Testis (tissue), 5 donors: ENCODE measurements at regions of chr5 and their contacts with region 1.

Region 1: DNA sequence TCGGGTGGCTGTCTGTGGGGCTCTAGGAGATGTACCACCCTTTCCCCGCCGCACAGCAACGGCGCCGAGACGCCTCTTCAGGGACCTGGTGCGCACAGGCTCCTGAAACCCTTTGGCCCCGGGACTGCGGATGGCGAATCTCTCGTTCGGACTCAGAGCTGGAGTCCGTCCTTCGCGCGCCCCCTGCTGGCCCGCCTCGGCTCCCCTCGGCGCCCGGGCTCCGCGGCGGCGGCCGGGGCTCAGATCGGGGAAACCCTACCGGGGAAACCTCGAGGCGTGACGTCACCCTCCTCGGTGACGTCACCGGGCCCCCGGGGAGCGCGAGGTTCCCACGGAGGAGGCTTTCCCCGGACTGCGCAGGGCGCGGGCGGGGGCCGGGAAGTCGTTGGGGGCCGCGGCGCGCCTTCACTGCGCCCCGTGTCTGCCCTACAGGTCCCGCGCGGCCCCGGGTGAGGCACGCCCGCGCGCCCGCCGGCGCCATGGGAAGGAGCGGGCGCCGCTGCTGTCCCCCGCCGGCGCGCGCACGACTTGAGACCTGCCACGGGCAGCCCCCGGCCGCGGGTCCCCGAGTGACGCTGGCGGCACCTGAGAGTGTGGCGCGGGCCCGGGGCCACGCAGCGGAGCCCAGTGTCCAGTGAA is 7.9 kb downstream of the PRR7 start:
- DNase-seq: peak; percentile 93
- H3K4me3 ChIP-seq: peak overlapping the region; percentile 58 to 66
- H3K27ac ChIP-seq: peak overlapping the region; percentile 24 to 55
- H3K4me1 ChIP-seq: peaks cover 14% of the 10 kb centered on the region
- H3K27me3 ChIP-seq: no peaks in the 10 kb centered on the region
- CTCF ChIP-seq: peak; percentile 91 to 99 (median 98)
- POLR2A ChIP-seq: no peak

Region 2: GRCh38 chr5:176447982-176448608 is 1006.4 kb before region 1 on chr5 and contains the start of gene FAF2:
- intact Hi-C with region 1: no loop called
- DNase-seq: peak; percentile 98
- H3K4me3 ChIP-seq: peak within 1 kb of the TSS; percentile 91 to 98
- H3K27ac ChIP-seq: peak within 1 kb of the TSS; percentile 93 to 95
- H3K4me1 ChIP-seq: peaks cover 17% of the 10 kb centered on the region
- H3K27me3 ChIP-seq: no peaks in the 10 kb centered on the region
- CTCF ChIP-seq: peak; percentile 98 to 99 (median 98)
- POLR2A ChIP-seq: peak; percentile 59
- total RNA-seq, gene FAF2: 53.9 to 57.6 TPM

Region 3: DNA sequence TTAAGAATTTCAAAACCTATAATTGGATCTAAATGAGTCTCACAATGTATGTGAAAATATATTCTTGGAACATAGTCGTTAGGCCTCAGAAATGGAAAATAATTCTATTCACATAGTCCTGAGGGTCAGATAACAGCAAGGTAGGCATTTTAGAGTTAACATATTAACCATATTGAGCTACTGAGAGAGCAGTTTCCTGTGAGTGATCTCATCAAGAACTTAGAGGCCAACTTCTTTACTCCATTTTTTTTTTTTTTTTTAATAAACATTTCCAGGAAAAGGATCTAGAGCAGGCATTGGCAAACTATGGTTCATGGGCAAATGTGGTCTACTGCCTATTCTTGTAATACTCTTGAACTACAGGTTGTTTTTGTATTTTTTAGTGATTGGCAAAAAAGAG is 177.6 kb before region 1 on chr5:
- intact Hi-C with region 1: no loop called
- DNase-seq: no peak
- H3K4me3 ChIP-seq: no peak overlapping the region
- H3K27ac ChIP-seq: no peak overlapping the region
- H3K4me1 ChIP-seq: no peaks in the 10 kb centered on the region
- H3K27me3 ChIP-seq: no peaks in the 10 kb centered on the region
- CTCF ChIP-seq: no peak
- POLR2A ChIP-seq: no peak

Region 4: DNA sequence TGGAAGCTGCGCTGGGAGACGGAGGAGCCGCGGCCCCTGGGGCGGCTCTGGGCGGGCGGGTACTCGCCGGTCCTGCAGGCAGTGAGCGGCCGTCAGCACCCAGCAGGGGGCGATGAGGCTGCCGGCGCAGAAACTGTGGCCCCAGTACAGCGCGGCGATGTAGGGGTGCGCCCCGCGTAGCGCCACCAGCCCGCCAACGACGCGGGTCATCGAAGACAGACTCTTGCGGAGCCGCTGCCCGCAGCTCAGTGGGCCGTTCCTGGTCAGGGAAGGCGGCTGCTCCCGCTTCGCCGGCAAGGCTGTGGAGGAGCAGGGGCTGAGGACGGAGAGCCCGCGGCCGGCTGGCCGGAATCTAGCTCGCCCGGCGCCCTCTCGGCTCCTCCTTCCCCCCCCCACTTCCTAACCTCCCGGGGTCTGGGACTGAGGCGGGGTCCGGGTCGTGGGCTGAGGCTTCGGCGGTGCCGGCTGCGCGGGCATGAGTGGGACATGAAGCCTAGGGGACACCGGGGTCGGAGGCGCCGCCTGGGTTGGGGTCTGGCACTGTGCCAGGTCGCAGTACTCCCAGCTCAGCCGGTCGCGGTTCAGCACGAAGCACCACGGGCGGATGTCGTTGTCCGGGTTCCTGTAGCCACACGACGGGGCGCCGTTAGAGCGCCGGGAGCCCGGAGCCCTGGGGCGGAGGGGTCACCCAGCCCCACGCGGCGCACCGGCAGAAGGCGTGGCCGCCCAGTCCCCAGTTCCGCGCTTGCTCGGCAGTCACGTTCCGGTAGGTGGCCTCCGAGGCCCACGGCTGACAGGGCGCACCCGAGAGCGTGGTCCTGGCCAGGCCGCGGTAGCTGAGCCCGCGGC is 50.5 kb before region 1 on chr5:
- intact Hi-C with region 1: loop called (anchors 5 kb)
- DNase-seq: peak; percentile 87
- H3K4me3 ChIP-seq: peak overlapping the region; percentile 47 to 60
- H3K27ac ChIP-seq: no peak overlapping the region
- H3K4me1 ChIP-seq: peaks cover 21% of the 10 kb centered on the region
- H3K27me3 ChIP-seq: no peaks in the 10 kb centered on the region
- CTCF ChIP-seq: peak; percentile 56 to 74 (median 74)
- POLR2A ChIP-seq: no peak